H1 (cell line): ENCODE measurements at regions of chr6 and their contacts with region 1.

Region 1: DNA sequence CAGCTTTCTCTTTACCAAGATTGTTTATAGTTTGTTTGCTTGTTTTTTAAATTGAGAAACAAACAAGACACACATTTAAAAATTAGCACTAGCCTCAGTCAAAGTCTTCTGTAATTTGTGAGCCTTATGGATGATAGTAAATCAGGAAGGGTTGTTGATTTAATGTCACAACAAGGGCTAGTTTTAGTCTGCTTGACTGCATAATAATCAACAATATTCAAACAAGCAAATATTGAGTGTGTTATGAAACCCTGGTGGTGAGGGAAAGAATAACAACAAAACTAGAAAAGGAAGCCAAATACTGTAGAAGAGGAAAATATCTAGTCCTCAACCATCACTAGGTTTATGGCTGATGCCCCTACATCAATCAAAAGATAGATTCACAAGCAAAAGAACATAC is 228.6 kb downstream of the TBC1D7 start:
- DNase-seq: no peak
- H3K4me3 ChIP-seq: no peak overlapping the region
- H3K27ac ChIP-seq: no peak overlapping the region
- H3K4me1 ChIP-seq: peaks cover 0 to 2% (median under 1%) of the 10 kb centered on the region in 4 experiments; a peak in 2 of 7 replicates
- H3K27me3 ChIP-seq: no peaks in the 10 kb centered on the region
- CTCF ChIP-seq: peak in 1 of 3 experiments; percentile 29; a peak in 1 of 4 replicates
- EP300 ChIP-seq: no peak
- POLR2A ChIP-seq: no peak
- RAD21 ChIP-seq: no peak

Region 2: GRCh38 chr6:13113981-13114593 is 14.3 kb after region 1 on chr6:
- CTCF ChIA-PET with region 1: interaction called, 26 read pairs
- POLR2A ChIA-PET with region 1: no interaction called
- DNase-seq: no peak
- H3K4me3 ChIP-seq: no peak overlapping the region
- H3K27ac ChIP-seq: no peak overlapping the region
- H3K4me1 ChIP-seq: peaks cover 0 to 2% (median 0%) of the 10 kb centered on the region in 4 experiments; a peak in 2 of 7 replicates
- H3K27me3 ChIP-seq: no peaks in the 10 kb centered on the region
- CTCF ChIP-seq: no peak
- EP300 ChIP-seq: no peak
- POLR2A ChIP-seq: no peak
- RAD21 ChIP-seq: no peak